ENCODE measurements at regions of chr2 and their contacts with region 1.

Region 1: DNA sequence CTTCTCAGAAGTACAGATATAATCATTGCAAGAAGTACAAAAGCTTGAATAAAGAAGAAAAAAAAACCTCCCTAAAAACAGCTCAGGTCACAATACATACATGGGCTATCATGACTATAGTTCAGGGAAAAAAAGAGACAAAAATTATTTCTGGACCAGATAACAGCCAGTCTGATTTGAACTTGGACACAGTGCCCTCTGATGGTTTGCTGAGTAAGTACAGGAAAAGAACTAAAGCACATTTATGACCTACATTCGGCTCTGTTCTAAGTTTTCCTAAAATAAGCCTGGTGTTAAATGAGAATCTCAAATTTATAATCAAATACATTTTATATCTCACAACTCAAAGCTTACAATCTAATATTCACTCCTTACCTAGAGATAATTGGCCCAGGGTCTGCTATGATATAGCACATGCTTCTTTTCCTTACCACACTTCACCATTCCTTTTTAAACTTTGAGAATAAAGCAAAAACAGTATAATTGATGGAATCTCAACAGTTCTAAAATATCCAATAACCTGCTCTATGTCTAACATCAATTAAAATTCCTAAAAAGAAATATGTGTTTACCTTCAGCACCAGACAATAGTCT is 81.1 kb downstream of the RAPH1 start:
- H3K4me3 ChIP-seq: no peak overlapping the region
- H3K27ac ChIP-seq: no peak overlapping the region
- H3K4me1 ChIP-seq: no peaks in the 10 kb centered on the region
- CTCF ChIP-seq: peak; percentile 26; the same call in 1 of the 2 replicates

Region 2: DNA sequence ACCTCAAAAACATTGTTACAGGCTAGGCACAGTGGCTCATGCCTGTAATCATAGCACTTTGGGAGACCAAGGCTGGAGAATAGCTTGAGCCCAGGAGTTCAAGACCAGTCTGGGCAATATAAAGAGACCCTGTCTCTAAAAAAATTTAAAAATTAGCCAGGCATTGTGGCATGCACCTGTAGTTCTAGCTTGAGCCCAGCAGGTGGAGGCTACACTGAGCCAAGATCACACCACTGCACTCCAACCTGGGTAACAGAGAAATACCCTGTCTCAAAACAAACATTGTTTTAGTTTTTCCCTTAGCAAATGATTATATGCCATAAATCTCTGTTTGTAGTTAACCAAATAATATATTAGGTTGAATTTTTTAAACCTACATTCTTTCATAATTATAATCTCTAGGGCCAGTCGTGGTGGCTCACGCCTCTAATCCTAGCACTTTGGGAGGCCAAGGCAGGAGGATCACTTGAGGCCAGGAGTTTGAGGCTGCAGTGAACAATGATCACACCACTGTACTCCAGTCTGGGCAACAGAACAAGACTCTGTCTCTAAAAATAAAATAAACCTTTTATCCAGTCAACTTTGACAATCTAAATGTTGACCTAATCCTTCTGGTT is 228.4 kb before region 1 on chr2:
- CTCF ChIA-PET with region 1: interaction called, 10 read pairs
- POLR2A ChIA-PET with region 1: no interaction called
- H3K4me3 ChIP-seq: no peak overlapping the region
- H3K27ac ChIP-seq: no peak overlapping the region
- H3K4me1 ChIP-seq: no peaks in the 10 kb centered on the region
- CTCF ChIP-seq: 0 out of 2 replicates have a peak, but pooled peaks have one; percentile 9

Region 3: GRCh38 chr2:203437511-203437910 is 16.4 kb before region 1 on chr2:
- CTCF ChIA-PET with region 1: interaction called, 11 read pairs
- POLR2A ChIA-PET with region 1: no interaction called
- H3K4me3 ChIP-seq: no peak overlapping the region
- H3K27ac ChIP-seq: no peak overlapping the region
- H3K4me1 ChIP-seq: no peaks in the 10 kb centered on the region
- CTCF ChIP-seq: no peak

Region 4: DNA sequence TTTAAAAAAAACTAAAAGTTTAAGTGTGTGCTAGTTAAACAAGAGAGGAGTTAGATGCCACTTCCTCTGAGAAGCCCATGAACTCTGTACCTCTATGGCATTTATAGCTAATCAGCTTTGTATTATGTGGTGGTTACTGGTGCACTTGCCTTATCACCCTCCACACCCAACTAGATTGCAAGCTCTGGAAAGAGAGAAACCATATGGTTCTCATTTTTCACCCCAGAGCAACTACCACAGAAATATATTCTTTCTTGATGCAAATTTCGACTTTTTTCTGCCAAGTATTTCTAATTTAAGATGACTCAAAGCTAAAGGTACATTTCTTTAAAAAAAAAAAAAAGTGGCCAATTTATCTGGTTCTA is 57.0 kb after region 1 on chr2:
- CTCF ChIA-PET with region 1: no interaction called
- POLR2A ChIA-PET with region 1: no interaction called
- H3K4me3 ChIP-seq: no peak overlapping the region
- H3K27ac ChIP-seq: no peak overlapping the region
- H3K4me1 ChIP-seq: no peaks in the 10 kb centered on the region
- CTCF ChIP-seq: no peak

Region 5: GRCh38 chr2:203814661-203815540 is 360.9 kb after region 1 on chr2:
- CTCF ChIA-PET with region 1: interaction called, 29 read pairs
- POLR2A ChIA-PET with region 1: no interaction called
- H3K4me3 ChIP-seq: no peak overlapping the region
- H3K27ac ChIP-seq: no peak overlapping the region
- H3K4me1 ChIP-seq: no peaks in the 10 kb centered on the region
- CTCF ChIP-seq: peak; percentile 60; the same call in 1 of the 2 replicates